Endothelial cell of umbilical vein (primary cell): ENCODE measurements at regions of chrX and their contacts with region 1.

Region 1: GRCh38 chrX:41137589-41137988 is 52.3 kb downstream of the USP9X start:
- DNase-seq: no peak
- H3K4me3 ChIP-seq: no peak overlapping the region
- H3K27ac ChIP-seq: no peak overlapping the region
- H3K4me1 ChIP-seq: no peaks in the 10 kb centered on the region
- H3K27me3 ChIP-seq: no peaks in the 10 kb centered on the region
- CTCF ChIP-seq: no peak
- POLR2A ChIP-seq: no peak

Region 2: GRCh38 chrX:41192880-41193279 is 55.3 kb after region 1 on chrX:
- CTCF ChIA-PET with region 1: no interaction called
- POLR2A ChIA-PET with region 1: no interaction called
- dilution Hi-C with region 1: no loop called
- intact Hi-C with region 1: no loop called
- DNase-seq: no peak
- H3K4me3 ChIP-seq: no peak overlapping the region
- H3K27ac ChIP-seq: no peak overlapping the region
- H3K4me1 ChIP-seq: no peaks in the 10 kb centered on the region
- H3K27me3 ChIP-seq: no peaks in the 10 kb centered on the region
- CTCF ChIP-seq: no peak
- POLR2A ChIP-seq: no peak

Region 3: GRCh38 chrX:41250867-41251266 is 113.3 kb after region 1 on chrX:
- CTCF ChIA-PET with region 1: interaction called, 5 read pairs
- POLR2A ChIA-PET with region 1: no interaction called
- dilution Hi-C with region 1: no loop called
- intact Hi-C with region 1: loop called (anchors 5 kb)
- DNase-seq: peak; percentile 59
- H3K4me3 ChIP-seq: no peak overlapping the region
- H3K27ac ChIP-seq: peak overlapping the region; percentile 59
- H3K4me1 ChIP-seq: no peaks in the 10 kb centered on the region
- H3K27me3 ChIP-seq: no peaks in the 10 kb centered on the region
- CTCF ChIP-seq: no peak
- POLR2A ChIP-seq: no peak